PC-9 (cell line): ENCODE measurements at regions of chr4 and their contacts with region 1.

Region 1: GRCh38 chr4:40515398-40516293 is 114.0 kb downstream of the RBM47 start:
- DNase-seq: peak; percentile 47 to 75
- H3K4me3 ChIP-seq: no peak overlapping the region; the same call in 1 of the 2 replicates
- H3K27ac ChIP-seq: peak overlapping the region; percentile 85
- H3K4me1 ChIP-seq: peaks cover 49% of the 10 kb centered on the region
- H3K27me3 ChIP-seq: no peaks in the 10 kb centered on the region
- CTCF ChIP-seq: no peak; the same call in 1 of the 2 replicates

Region 2: DNA sequence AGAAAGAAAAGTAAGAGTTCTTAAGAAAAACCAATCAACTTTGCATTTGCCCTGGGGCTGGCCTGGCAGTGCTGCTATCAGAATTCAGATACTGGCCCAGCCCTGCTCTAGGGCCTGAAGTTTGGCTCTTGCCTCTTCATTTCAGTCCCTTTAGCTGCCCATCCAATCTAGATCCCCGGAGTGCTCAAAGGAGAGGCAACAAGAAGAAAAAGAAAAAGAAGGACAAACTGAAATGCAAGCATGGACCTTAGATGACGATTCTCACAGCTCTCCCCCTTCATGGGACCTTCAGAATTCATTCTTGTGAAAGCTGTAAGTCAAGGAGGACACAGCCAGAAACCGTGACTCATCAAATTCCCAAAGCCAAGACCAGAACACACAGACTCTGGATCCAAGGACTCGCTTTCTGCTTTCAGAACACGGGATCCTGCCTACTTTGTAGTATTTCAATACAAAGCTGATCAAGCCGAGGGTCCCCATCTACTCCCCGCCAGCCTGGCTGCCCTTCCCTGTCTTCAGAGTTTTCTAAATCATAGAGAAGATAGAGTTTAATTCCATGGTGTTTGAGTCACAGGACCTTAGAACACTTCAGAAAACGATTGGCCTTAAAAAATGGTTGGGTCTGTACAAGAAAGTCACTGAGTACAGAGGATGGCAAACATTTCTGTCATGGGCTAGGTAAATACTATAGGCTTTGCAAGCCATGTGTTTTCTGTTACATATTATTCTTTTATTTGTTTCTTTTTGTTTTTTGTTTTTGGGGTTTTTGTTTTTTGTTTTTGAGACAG is 10.4 kb after region 1 on chr4:
- CTCF ChIA-PET with region 1: no interaction called
- POLR2A ChIA-PET with region 1: no interaction called
- intact Hi-C with region 1: loop called (anchors 1 kb)
- DNase-seq: peak; percentile 55 to 81
- H3K4me3 ChIP-seq: peak overlapping the region; percentile 19; the same call in 1 of the 2 replicates
- H3K27ac ChIP-seq: peak overlapping the region; percentile 92
- H3K4me1 ChIP-seq: peaks cover 25% of the 10 kb centered on the region
- H3K27me3 ChIP-seq: no peaks in the 10 kb centered on the region
- CTCF ChIP-seq: no peak

Region 3: DNA sequence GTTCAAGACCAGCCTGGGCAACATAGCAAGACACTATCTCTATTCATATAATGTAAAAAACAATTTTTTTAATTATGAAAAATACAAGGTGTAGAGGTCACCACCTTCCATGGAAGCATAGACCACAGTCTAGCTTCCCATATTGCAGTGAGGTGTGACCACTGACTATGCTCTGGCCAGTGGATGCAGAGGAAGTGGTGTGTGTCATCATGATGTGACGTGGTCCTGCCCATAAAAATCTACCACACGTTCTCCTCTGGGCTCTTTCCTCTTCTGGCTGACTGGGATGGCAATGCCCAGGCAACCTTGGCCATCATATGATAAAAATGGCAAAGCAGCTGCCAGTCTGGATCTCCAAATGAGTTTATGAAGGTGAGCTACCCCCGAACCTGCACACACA is 48.4 kb after region 1 on chr4:
- CTCF ChIA-PET with region 1: no interaction called
- POLR2A ChIA-PET with region 1: no interaction called
- intact Hi-C with region 1: loop called (anchors 10 kb)
- DNase-seq: peak; percentile 22 to 52
- H3K4me3 ChIP-seq: peak overlapping the region; percentile 40; the same call in 1 of the 2 replicates
- H3K27ac ChIP-seq: peak overlapping the region; percentile 98
- H3K4me1 ChIP-seq: peaks cover 88% of the 10 kb centered on the region
- H3K27me3 ChIP-seq: no peaks in the 10 kb centered on the region
- CTCF ChIP-seq: no peak